HepG2 (cell line): ENCODE measurements at regions of chr2 and their contacts with region 1.

Region 1: DNA sequence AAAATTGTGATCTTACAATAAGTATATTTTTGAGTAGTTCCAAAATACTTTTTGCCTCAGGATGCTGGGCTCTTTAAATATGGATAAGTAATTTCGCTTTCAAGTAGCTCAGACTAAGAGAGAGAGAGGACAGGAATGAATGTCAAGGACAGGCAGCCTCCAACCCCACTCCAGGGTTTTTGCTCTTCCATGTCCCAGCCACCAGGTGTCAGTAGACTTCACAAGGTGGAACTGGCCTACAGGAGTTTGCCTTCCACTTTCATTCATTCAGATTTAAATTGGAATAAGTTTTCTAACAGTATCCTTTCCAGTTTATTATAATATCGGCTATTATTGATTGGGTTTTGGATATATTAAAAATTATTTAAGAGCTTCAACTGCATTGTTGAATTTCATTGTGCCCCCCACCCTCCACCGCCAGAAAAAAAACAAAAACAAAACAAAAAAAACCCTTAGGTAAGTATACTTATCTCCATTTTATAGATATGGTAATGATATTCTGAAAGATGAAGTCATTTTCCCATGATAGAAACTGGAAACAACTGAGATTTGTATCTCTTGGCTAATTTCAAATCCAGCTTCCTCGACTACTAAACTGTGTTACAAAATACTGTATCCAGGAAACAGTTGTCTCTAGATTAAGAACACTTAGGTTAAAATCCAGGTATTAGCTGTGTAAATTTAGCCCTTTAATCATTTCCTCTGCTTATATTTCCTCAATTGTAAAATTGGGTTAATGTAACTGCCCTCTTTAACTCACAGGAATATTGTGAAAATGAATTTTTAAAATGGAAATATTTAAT is 793.1 kb downstream of the ERBB4 start:
- DNase-seq: peak; percentile 71
- ATAC-seq: peak; percentile 100
- H3K4me3 ChIP-seq: no peak overlapping the region
- H3K27ac ChIP-seq: no peak overlapping the region
- H3K4me1 ChIP-seq: no peaks in the 10 kb centered on the region
- H3K27me3 ChIP-seq: no peaks in the 10 kb centered on the region
- CTCF ChIP-seq: peak; percentile 87
- EP300 ChIP-seq: no peak
- POLR2A ChIP-seq: no peak
- RAD21 ChIP-seq: peak; percentile 63

Region 2: DNA sequence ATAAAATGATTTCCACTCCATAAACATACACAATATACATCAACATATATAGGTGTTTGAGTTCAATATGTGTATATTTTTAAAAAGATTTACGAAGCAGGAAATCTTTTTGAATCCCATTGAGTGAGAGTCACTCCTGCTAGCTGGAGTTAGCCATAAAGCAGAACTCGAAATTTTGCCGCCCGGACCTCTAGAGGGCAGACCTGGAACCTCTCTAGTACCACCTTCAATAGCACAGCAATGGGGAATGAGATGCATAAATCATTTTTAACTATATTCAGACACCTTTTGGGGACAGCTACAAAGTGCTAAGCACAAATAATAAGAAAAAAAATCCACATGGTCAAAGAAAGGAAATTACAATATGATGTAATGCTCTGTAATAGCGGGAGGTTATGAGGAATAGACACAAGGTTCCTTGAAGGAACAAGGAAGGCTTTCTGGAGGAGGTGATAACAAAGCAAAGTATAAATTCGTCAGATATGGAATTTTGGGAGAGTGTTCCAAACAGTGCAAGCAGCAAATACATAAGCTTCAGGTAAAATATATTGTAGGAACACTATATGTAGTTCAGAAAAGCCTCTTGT is 259.7 kb after region 1 on chr2:
- CTCF ChIA-PET with region 1: interaction called, 4 read pairs
- POLR2A ChIA-PET with region 1: no interaction called
- in situ Hi-C with region 1: no loop called
- intact Hi-C with region 1: loop called (anchors 10 kb)
- DNase-seq: peak; percentile 13
- ATAC-seq: peak; percentile 95
- H3K4me3 ChIP-seq: no peak overlapping the region
- H3K27ac ChIP-seq: no peak overlapping the region
- H3K4me1 ChIP-seq: no peaks in the 10 kb centered on the region
- H3K27me3 ChIP-seq: no peaks in the 10 kb centered on the region
- CTCF ChIP-seq: peak; percentile 58
- EP300 ChIP-seq: no peak
- POLR2A ChIP-seq: no peak
- RAD21 ChIP-seq: no peak

Region 3: DNA sequence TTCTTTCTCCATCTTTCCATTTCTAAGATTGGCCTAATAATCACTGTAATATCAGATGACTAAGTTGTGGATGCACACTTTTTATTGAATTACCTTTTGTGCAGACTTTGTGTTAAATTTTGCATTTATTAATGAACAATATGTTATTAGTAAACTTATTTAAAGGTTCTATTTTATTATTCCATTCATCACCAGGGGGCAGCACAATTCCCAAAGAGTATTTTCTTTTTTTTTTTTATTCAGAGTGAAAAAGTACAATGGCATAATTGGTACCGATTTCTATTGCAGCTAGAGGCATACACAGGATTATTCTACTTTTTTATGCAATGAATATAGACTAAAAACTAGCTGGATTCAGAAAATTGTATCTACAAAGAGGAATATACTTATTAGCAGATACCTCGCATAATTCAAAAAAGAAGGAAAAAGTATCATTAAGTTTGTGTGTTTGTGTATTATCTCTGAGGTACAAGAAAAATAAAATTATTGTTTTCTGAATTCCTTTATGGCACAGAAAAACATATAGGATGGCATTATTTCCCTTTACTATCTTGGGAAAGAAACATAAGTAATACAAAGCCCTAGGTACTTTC is 402.5 kb after region 1 on chr2:
- CTCF ChIA-PET with region 1: no interaction called
- POLR2A ChIA-PET with region 1: no interaction called
- in situ Hi-C with region 1: no loop called
- intact Hi-C with region 1: loop called (anchors 2 kb)
- DNase-seq: peak; percentile 12
- ATAC-seq: no peak
- H3K4me3 ChIP-seq: no peak overlapping the region
- H3K27ac ChIP-seq: no peak overlapping the region
- H3K4me1 ChIP-seq: no peaks in the 10 kb centered on the region
- H3K27me3 ChIP-seq: no peaks in the 10 kb centered on the region
- CTCF ChIP-seq: peak; percentile 37
- EP300 ChIP-seq: no peak
- POLR2A ChIP-seq: no peak
- RAD21 ChIP-seq: no peak

Region 4: DNA sequence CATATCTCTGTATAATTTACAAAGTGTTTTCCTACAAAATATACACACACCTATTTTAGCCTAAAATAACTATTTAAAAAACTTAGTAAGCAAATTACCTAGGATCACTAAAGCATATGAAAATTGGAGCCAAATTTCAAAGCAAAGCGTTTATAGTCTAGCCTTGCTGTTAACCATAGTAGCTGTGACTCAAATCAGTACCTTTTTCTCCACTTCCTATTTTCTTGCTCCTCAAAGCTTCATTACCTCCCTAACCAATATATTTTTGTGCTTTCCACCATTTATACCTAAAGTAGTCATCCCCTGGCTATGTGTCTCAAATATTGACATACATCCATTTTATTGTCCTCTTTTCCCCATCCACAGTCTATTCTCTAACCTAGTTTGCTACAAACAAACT is 720.0 kb after region 1 on chr2:
- CTCF ChIA-PET with region 1: no interaction called
- POLR2A ChIA-PET with region 1: no interaction called
- in situ Hi-C with region 1: no loop called
- intact Hi-C with region 1: loop called (anchors 1 kb)
- DNase-seq: no peak
- ATAC-seq: no peak
- H3K4me3 ChIP-seq: no peak overlapping the region
- H3K27ac ChIP-seq: no peak overlapping the region
- H3K4me1 ChIP-seq: no peaks in the 10 kb centered on the region
- H3K27me3 ChIP-seq: no peaks in the 10 kb centered on the region
- CTCF ChIP-seq: no peak
- EP300 ChIP-seq: no peak
- POLR2A ChIP-seq: no peak
- RAD21 ChIP-seq: no peak

Region 5: DNA sequence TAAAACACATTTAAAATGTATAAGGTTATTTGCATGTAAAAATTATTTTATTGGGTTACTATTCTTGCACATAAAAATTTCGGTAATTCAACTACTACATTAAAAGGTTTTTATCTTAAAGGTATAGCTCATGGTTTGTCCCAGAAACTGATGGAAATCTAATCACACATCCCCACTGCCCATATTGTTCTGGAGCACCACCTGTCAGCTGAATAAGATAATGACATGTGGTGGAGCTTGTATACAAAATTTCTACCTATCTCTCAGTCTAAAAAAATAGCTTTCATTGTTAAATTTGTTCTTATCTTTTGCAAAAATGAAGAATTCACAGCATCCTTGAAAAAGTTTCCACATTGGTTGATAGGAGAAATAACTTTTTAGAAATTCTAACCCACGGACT is 774.8 kb after region 1 on chr2:
- CTCF ChIA-PET with region 1: no interaction called
- POLR2A ChIA-PET with region 1: no interaction called
- in situ Hi-C with region 1: no loop called
- intact Hi-C with region 1: loop called (anchors 1 kb)
- DNase-seq: peak; percentile 21
- ATAC-seq: peak; percentile 66; the same call in 2 of the 3 replicates
- H3K4me3 ChIP-seq: no peak overlapping the region
- H3K27ac ChIP-seq: no peak overlapping the region
- H3K4me1 ChIP-seq: no peaks in the 10 kb centered on the region
- H3K27me3 ChIP-seq: no peaks in the 10 kb centered on the region
- CTCF ChIP-seq: peak; percentile 52
- EP300 ChIP-seq: no peak
- POLR2A ChIP-seq: no peak
- RAD21 ChIP-seq: no peak

Region 6: GRCh38 chr2:212548450-212548819 is 802.9 kb after region 1 on chr2:
- CTCF ChIA-PET with region 1: no interaction called
- POLR2A ChIA-PET with region 1: no interaction called
- in situ Hi-C with region 1: no loop called
- intact Hi-C with region 1: loop called (anchors 1 kb)
- DNase-seq: peak; percentile 42
- ATAC-seq: peak; percentile 79
- H3K4me3 ChIP-seq: no peak overlapping the region
- H3K27ac ChIP-seq: no peak overlapping the region
- H3K4me1 ChIP-seq: no peaks in the 10 kb centered on the region
- H3K27me3 ChIP-seq: no peaks in the 10 kb centered on the region
- CTCF ChIP-seq: peak; percentile 61
- EP300 ChIP-seq: no peak
- POLR2A ChIP-seq: no peak
- RAD21 ChIP-seq: no peak